BJ (cell line): ENCODE measurements at regions of chr1 and their contacts with region 1.

Region 1: DNA sequence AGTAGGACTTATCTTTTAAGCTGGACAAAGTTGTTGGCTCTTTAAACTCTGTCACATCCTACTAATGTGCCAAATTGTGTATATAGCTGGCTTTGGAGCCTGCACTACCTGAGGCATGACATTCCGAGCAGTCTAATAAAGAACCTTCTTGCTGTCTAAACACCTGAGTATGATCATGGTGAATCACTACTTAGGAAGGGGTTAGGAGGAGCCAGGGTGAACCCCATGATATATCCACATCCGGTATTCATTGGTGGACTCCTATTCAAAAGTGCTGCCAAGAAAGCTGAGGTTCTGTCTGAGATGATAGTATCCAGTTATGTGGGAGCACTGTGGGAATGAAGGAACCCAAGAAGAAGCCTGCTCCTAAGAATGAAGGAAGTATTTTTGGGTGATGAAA is 27.1 kb downstream of the CRNN start:
- DNase-seq: no peak
- H3K4me3 ChIP-seq: no peak overlapping the region
- H3K27me3 ChIP-seq: no peaks in the 10 kb centered on the region
- CTCF ChIP-seq: no peak

Region 2: DNA sequence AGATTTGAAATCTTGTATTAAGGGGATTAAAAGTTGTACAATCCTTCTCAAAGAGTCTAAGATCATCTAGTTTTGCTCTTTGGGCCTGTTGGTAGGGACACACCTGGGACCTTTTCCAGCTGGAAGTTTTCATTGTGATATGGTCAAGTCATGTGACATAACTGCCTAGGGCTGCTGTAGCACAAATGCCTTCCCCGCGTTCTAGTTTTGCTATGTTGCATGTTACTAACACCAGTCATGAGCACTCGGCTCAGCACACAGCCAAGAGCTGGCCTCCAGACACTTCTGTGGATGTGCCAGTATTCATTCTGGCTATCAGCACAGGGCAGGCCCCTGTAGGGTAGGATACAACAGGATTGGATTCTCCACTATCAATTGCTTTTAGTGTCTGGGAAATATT is 12.5 kb before region 1 on chr1:
- CTCF ChIA-PET with region 1: no interaction called
- POLR2A ChIA-PET with region 1: no interaction called
- DNase-seq: no peak
- H3K4me3 ChIP-seq: no peak overlapping the region
- H3K27me3 ChIP-seq: no peaks in the 10 kb centered on the region
- CTCF ChIP-seq: no peak

Region 3: DNA sequence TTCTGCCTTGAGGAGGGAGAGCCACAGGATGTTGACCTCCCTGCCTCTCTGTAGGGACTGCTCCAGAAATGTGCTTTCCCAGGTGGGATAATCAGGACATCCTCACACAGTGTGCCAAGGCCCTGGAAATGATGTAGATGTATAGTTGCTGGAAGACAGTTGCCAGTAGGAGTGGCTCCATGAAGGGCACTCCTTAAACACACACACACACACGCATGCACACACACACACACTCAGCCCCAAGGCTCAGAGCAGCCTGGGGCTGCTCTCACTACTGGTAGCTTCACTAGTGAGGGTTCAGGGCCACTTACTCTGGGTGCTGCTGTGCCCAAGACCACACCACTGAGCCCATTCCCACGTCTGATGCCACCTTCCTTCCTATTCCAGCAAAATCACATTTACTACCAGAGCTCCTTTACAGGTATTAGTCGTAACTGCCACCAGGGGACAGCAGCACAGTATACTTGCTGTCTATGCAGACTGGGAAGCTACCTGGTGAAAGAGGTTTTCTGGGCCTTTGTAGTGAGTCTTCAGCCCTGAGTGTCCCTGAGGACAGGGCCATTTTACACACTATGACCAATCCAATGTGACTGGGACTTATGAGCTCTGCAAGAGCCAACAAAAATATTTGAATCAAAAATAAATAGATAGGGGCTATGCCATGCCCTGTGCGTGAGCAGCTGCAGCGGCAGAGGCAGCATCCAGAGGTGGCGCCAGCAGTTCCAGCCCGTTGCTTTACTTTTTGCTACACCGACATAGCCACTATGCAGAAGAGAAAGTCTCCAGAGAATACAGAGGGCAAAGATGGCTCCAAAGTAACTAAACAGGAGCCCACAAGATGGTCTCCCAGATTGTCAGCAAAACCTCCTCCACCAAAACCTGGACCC is 12.1 kb after region 1 on chr1:
- CTCF ChIA-PET with region 1: interaction called, 14 read pairs
- POLR2A ChIA-PET with region 1: no interaction called
- DNase-seq: no peak
- H3K4me3 ChIP-seq: no peak overlapping the region
- H3K27me3 ChIP-seq: no peaks in the 10 kb centered on the region; the same call in 1 of the 2 replicates
- CTCF ChIP-seq: peak; percentile 42

Region 4: DNA sequence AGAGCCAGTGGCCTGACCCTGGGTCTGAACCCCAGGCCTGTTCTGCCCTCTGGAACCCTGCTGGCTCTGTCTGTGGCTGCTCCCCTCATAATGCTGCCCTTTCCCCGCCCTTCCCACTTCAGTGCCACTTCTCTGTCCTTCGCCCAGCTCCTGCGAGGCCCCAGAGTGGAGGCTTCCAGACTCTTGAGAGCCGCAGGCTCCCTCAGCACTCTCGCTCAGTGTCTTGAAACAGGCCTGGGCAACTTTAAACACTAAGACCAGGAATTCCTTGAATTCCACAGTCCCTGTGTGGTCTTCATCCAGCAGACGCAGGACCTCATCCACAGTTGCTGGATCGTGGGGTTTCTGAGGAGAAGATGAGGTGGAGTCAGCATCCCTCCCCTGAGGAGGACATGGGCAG is 23.7 kb after region 1 on chr1:
- CTCF ChIA-PET with region 1: no interaction called
- POLR2A ChIA-PET with region 1: no interaction called
- DNase-seq: no peak
- H3K4me3 ChIP-seq: no peak overlapping the region
- H3K27me3 ChIP-seq: no peaks in the 10 kb centered on the region
- CTCF ChIP-seq: no peak

Region 5: DNA sequence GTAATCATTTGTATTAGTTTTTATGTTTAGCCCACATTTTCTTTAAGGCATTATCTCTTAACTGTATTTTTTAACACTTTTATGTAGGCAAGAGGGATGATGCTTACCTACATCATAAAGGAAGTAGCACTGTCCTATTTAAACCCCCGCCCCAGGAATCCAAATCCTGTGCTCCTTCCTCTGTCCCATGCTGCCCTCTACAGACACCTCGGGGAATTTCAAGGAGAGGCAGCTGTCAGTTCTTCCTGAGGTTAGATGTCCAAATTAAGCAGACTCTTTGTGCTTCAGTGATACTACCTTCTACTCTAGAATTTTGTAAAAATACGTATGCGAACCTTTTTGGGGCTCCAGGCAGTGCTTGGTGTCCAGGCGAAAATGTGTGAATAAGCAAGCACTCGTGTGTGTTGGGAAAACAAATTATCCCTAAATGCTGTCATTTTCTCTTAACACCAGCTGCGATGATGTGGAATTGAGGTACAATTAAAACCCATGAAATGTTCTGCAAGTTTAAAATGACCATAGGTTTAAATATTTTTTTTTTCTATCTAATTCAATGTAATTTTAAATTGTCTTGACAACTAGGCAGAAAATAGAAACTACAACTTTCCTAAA is 146.5 kb after region 1 on chr1:
- CTCF ChIA-PET with region 1: no interaction called
- POLR2A ChIA-PET with region 1: no interaction called
- DNase-seq: no peak
- H3K4me3 ChIP-seq: no peak overlapping the region
- H3K27me3 ChIP-seq: peaks cover 1% of the 10 kb centered on the region; the same call in 1 of the 2 replicates
- CTCF ChIP-seq: peak; percentile 77

Region 6: GRCh38 chr1:152707860-152708259 is 320.9 kb after region 1 on chr1 and contains the start of gene LCE4A:
- CTCF ChIA-PET with region 1: no interaction called
- POLR2A ChIA-PET with region 1: no interaction called
- DNase-seq: no peak
- H3K4me3 ChIP-seq: no peak within 1 kb of the TSS
- H3K27me3 ChIP-seq: no peaks in the 10 kb centered on the region
- CTCF ChIP-seq: no peak
- polyA plus RNA-seq, gene LCE4A: not detected in 2 replicates